ENCODE measurements at regions of chr12 and their contacts with region 1.

Region 1: DNA sequence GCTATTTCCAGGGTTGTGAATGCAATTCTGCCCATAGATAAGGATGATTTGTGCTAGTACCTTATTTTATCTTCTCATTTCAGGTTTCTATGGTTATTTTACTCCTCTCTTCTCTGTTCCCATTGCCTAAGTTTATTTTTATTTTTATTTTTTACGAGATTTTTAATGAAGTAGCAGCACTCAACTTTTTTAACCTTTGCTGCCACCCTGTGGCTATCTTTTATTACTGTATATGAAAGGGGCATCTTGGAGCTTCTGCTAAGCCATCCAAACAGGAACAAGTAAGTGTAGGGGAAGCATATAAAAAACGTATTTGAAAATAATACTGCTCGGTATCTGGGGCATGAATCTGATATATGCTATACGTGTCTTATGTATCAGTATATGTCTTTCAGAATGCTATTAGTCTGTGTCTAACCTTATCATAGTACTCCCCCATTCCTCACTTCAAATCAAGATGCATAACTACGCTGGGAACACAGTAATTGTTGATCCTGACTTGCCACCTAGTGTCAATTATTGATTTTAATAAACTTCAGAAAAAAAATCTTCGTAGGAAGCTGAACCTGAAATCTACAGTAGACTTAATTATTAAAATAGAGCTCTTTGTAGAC is 60.3 kb downstream of the KLRG1 start:
- DNase-seq: peak; percentile 33
- CTCF ChIP-seq: peak; percentile 43

Region 2: DNA sequence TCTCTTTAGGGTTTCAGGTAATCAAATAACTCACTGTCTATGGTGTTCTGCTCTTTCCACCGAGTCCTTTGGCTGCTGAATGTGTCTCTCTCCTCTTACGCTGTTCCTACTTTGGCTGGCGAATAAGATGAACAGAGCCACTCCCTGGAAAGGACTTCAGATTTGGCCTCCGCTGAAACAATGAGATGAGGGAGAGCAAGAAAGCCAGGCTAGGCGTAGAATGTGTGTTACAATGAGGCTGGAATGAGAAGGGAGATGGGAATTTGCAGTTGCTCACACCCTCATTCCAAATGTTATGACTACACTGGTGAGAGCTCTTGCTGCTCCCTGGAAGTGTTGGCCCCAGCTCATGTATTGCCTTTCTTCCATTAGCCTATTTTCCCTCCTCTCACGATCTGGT is 387.0 kb before region 1 on chr12 and contains the start of gene MFAP5:
- CTCF ChIA-PET with region 1: interaction called, 18 read pairs
- POLR2A ChIA-PET with region 1: no interaction called
- DNase-seq: no peak
- CTCF ChIP-seq: no peak

Region 3: GRCh38 chr12:8687846-8688601 is 361.6 kb before region 1 on chr12:
- CTCF ChIA-PET with region 1: interaction called, 25 read pairs
- POLR2A ChIA-PET with region 1: no interaction called
- DNase-seq: no peak
- CTCF ChIP-seq: no peak

Region 4: GRCh38 chr12:8949342-8950220 is 100.0 kb before region 1 on chr12 and contains the start of gene M6PR:
- CTCF ChIA-PET with region 1: interaction called, 23 read pairs
- POLR2A ChIA-PET with region 1: no interaction called
- DNase-seq: peak; percentile 92
- CTCF ChIP-seq: peak; percentile 77

Region 5: DNA sequence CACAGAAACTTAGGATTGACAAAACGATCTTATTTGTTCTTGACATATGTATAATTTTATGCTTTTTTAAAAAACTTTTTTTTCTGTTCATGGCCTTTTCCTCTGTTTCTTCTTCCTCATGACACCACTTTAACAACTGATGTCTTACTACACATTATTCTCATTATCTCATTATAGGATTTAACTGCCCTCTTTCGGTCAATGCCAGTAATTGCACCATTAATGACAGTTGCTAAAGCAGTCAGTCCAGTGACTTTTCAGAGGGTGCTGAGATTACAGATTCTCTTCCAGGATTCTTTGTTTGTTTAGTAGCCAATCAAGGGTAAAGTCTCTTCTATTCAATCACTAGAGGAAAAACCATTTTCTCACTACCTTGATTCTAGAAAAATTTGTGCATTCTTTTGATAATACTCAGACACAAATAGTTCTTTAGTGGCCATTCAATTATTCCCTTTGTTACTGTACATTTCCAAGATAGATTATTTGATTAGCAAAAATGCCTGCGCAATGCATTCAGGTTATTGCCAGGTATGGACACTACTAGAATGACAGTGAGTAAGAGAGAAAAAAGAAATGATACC is 10.1 kb before region 1 on chr12:
- CTCF ChIA-PET with region 1: interaction called, 45 read pairs
- POLR2A ChIA-PET with region 1: no interaction called
- DNase-seq: peak; percentile 76
- CTCF ChIP-seq: peak; percentile 82

Region 6: GRCh38 chr12:9214536-9214935 is 164.9 kb after region 1 on chr12:
- CTCF ChIA-PET with region 1: no interaction called
- POLR2A ChIA-PET with region 1: no interaction called
- DNase-seq: no peak
- CTCF ChIP-seq: no peak

Region 7: GRCh38 chr12:9273276-9273675 is 223.6 kb after region 1 on chr12:
- CTCF ChIA-PET with region 1: no interaction called
- POLR2A ChIA-PET with region 1: no interaction called
- DNase-seq: no peak
- CTCF ChIP-seq: no peak

Measured in GM10248 (cell line).